Activated CD4-positive, alpha-beta memory T cell treated with anti-CD3 and anti-CD28 coated beads for 36 hours (primary cell): ENCODE measurements at regions of chr22 and their contacts with region 1.

Region 1: DNA sequence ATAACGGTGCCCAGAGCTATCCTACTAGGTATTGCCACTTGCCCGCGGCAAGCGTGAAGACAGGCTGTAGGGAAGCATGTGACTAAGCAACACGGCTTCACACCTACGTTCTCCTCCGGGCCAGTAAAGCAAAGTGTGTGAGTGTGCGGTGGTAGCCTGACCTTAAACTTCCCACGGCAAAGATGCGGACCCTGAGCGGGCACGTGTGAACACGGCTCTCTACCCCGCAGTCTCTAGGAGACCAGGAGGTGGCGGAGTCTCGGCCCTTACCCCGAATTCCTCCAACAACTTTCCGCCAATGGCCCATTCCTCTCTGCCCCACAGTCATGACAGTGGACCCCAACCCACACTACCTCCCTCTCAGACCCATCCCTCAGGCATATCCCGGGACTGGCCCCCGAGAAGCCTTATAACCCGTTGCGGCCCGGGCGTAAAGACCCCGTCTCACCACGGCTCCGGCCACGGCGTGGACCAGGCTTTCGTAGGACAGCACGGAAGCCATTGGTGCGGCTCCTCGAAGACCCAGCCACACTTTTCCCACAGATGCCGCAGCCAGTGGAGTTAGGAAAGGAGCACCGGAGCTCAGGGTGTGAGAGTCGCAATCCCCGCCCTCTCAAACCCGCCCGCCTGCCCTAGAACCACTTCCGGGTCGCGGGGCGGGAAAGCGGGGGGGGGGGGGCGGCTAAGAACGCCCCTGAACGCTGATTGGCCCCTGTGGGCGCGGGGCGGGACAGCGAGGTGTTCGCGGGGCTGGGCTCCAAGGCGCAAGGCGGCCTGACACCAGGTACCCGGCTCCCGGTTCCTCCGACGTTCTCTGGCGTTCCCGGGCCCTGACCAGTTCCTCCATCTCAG is at the start of gene SLC25A17:
- DNase-seq: peak; percentile 92
- H3K4me3 Mint-ChIP-seq: peak within 1 kb of the TSS; percentile 92
- H3K27ac Mint-ChIP-seq: peak within 1 kb of the TSS; percentile 76
- H3K4me1 Mint-ChIP-seq: peaks cover 33% of the 10 kb centered on the region
- H3K27me3 Mint-ChIP-seq: no peaks in the 10 kb centered on the region
- total RNA-seq, gene SLC25A17: 29.3 to 30.8 TPM

Region 2: GRCh38 chr22:40714192-40714951 is 104.6 kb before region 1 on chr22:
- CTCF ChIA-PET with region 1: interaction called, 3 read pairs
- POLR2A ChIA-PET with region 1: no interaction called
- intact Hi-C with region 1: loop called (anchors 10 kb)
- DNase-seq: no peak
- H3K4me3 Mint-ChIP-seq: no peak overlapping the region
- H3K27ac Mint-ChIP-seq: no peak overlapping the region
- H3K4me1 Mint-ChIP-seq: peaks cover 12% of the 10 kb centered on the region
- H3K27me3 Mint-ChIP-seq: peaks cover 7% of the 10 kb centered on the region

Region 3: GRCh38 chr22:40898850-40899357 is 79.9 kb after region 1 on chr22:
- CTCF ChIA-PET with region 1: interaction called, 23 read pairs
- POLR2A ChIA-PET with region 1: no interaction called
- intact Hi-C with region 1: no loop called
- DNase-seq: peak; percentile 41
- H3K4me3 Mint-ChIP-seq: peak overlapping the region; percentile 20
- H3K27ac Mint-ChIP-seq: peak overlapping the region; percentile 88
- H3K4me1 Mint-ChIP-seq: peaks cover 14% of the 10 kb centered on the region
- H3K27me3 Mint-ChIP-seq: no peaks in the 10 kb centered on the region